ENCODE measurements at regions of chr10 and their contacts with region 1.

Region 1: GRCh38 chr10:110210674-110211464 is 3.5 kb downstream of the MXI1 start:
- DNase-seq: peak; percentile 87 to 93 (median 88)
- H3K4me3 ChIP-seq: peak overlapping the region; percentile 42 to 78
- H3K4me3 Mint-ChIP-seq: peak overlapping the region; percentile 91 to 99 (median 94)
- H3K27ac ChIP-seq: peak overlapping the region; percentile 92
- H3K27ac Mint-ChIP-seq: peak overlapping the region; percentile 94 to 99 (median 97)
- H3K4me1 ChIP-seq: peaks cover 59% of the 10 kb centered on the region
- H3K4me1 Mint-ChIP-seq: peaks cover 43 to 86% (median 52%) of the 10 kb centered on the region in 4 donors
- H3K27me3 ChIP-seq: no peaks in the 10 kb centered on the region
- H3K27me3 Mint-ChIP-seq: no peaks in the 10 kb centered on the region

Region 2: GRCh38 chr10:109487691-109488090 is 723.2 kb before region 1 on chr10:
- CTCF ChIA-PET with region 1: no interaction called
- POLR2A ChIA-PET with region 1: no interaction called
- intact Hi-C with region 1: no loop called
- DNase-seq: no peak
- H3K4me3 ChIP-seq: no peak overlapping the region
- H3K4me3 Mint-ChIP-seq: no peak overlapping the region
- H3K27ac ChIP-seq: no peak overlapping the region
- H3K27ac Mint-ChIP-seq: no peak overlapping the region
- H3K4me1 ChIP-seq: no peaks in the 10 kb centered on the region
- H3K4me1 Mint-ChIP-seq: no peaks in the 10 kb centered on the region
- H3K27me3 ChIP-seq: no peaks in the 10 kb centered on the region
- H3K27me3 Mint-ChIP-seq: no peaks in the 10 kb centered on the region

Region 3: GRCh38 chr10:110158051-110159005 is 52.5 kb before region 1 on chr10:
- CTCF ChIA-PET with region 1: interaction called, 10 read pairs
- POLR2A ChIA-PET with region 1: interaction called, 75 read pairs
- intact Hi-C with region 1: loop called (anchors 5 kb)
- DNase-seq: no peak
- H3K4me3 ChIP-seq: no peak overlapping the region
- H3K4me3 Mint-ChIP-seq: peak overlapping the region in 1 of 8 donors; percentile 28
- H3K27ac ChIP-seq: no peak overlapping the region
- H3K27ac Mint-ChIP-seq: peak overlapping the region in 1 of 7 donors; percentile 21
- H3K4me1 ChIP-seq: peaks cover 22% of the 10 kb centered on the region
- H3K4me1 Mint-ChIP-seq: peaks cover 11 to 40% (median 20%) of the 10 kb centered on the region in 4 donors
- H3K27me3 ChIP-seq: peaks cover 16% of the 10 kb centered on the region
- H3K27me3 Mint-ChIP-seq: peaks cover 39 to 63% of the 10 kb centered on the region in 2 donors

Region 4: GRCh38 chr10:110225756-110226542 is 15.1 kb after region 1 on chr10:
- CTCF ChIA-PET with region 1: interaction called, 203 read pairs
- POLR2A ChIA-PET with region 1: interaction called, 464 read pairs
- intact Hi-C with region 1: loop called (anchors 1 kb)
- DNase-seq: peak; percentile 88 to 90 (median 89)
- H3K4me3 ChIP-seq: peak overlapping the region; percentile 39 to 82
- H3K4me3 Mint-ChIP-seq: peak overlapping the region; percentile 92 to 96 (median 94)
- H3K27ac ChIP-seq: peak overlapping the region; percentile 67
- H3K27ac Mint-ChIP-seq: peak overlapping the region; percentile 91 to 96 (median 96)
- H3K4me1 ChIP-seq: peaks cover 29% of the 10 kb centered on the region
- H3K4me1 Mint-ChIP-seq: peaks cover 27 to 62% (median 42%) of the 10 kb centered on the region in 4 donors
- H3K27me3 ChIP-seq: no peaks in the 10 kb centered on the region
- H3K27me3 Mint-ChIP-seq: no peaks in the 10 kb centered on the region

Region 5: GRCh38 chr10:110273474-110273873 is 62.6 kb after region 1 on chr10:
- CTCF ChIA-PET with region 1: interaction called, 56 read pairs
- POLR2A ChIA-PET with region 1: interaction called, 46 read pairs
- intact Hi-C with region 1: no loop called
- DNase-seq: peak; percentile 20 to 74 (median 36)
- H3K4me3 ChIP-seq: no peak overlapping the region
- H3K4me3 Mint-ChIP-seq: peak overlapping the region in 5 of 8 donors; percentile 6 to 87 (median 66)
- H3K27ac ChIP-seq: no peak overlapping the region
- H3K27ac Mint-ChIP-seq: peak overlapping the region in 6 of 7 donors; percentile 33 to 96 (median 89)
- H3K4me1 ChIP-seq: peaks cover 47% of the 10 kb centered on the region
- H3K4me1 Mint-ChIP-seq: peaks cover 32 to 74% (median 61%) of the 10 kb centered on the region in 4 donors
- H3K27me3 ChIP-seq: no peaks in the 10 kb centered on the region
- H3K27me3 Mint-ChIP-seq: no peaks in the 10 kb centered on the region

Region 6: DNA sequence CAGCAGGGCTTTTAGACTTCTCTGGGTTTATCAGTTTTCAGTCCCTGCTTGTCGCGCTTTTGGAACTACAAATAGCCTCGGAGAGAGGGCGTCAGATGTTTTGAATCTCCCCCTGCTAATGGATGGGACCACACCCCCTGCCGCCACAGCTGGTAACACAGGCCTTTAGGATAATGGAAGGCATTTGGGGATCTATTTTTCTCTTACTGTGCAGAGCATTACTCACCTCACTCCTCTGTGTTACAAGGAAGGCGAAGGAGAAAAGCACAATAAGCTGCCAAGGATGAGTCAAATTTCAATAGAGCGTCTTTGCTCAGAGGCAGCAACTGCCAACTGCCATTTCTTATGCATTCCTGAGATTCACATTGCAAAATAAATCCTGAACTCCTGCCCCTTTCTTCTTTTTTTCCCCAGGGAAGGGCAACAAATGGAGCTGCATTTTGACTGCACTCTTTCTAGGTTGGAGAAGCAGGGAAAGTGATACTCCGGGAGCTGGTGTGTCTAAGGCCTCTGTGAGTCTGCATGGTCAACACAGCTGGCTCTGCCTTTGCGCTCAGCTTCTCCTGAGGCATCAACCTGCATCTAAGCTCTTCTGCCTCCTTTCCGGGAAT is 125.3 kb after region 1 on chr10:
- CTCF ChIA-PET with region 1: no interaction called
- POLR2A ChIA-PET with region 1: no interaction called
- intact Hi-C with region 1: no loop called
- DNase-seq: no peak
- H3K4me3 ChIP-seq: no peak overlapping the region
- H3K4me3 Mint-ChIP-seq: no peak overlapping the region
- H3K27ac ChIP-seq: no peak overlapping the region
- H3K27ac Mint-ChIP-seq: peak overlapping the region in 1 of 7 donors; percentile 29
- H3K4me1 ChIP-seq: peaks cover 15% of the 10 kb centered on the region
- H3K4me1 Mint-ChIP-seq: peaks cover 7 to 13% (median 10%) of the 10 kb centered on the region in 4 donors
- H3K27me3 ChIP-seq: no peaks in the 10 kb centered on the region
- H3K27me3 Mint-ChIP-seq: peaks cover 0 to 4% of the 10 kb centered on the region in 2 donors

Region 7: DNA sequence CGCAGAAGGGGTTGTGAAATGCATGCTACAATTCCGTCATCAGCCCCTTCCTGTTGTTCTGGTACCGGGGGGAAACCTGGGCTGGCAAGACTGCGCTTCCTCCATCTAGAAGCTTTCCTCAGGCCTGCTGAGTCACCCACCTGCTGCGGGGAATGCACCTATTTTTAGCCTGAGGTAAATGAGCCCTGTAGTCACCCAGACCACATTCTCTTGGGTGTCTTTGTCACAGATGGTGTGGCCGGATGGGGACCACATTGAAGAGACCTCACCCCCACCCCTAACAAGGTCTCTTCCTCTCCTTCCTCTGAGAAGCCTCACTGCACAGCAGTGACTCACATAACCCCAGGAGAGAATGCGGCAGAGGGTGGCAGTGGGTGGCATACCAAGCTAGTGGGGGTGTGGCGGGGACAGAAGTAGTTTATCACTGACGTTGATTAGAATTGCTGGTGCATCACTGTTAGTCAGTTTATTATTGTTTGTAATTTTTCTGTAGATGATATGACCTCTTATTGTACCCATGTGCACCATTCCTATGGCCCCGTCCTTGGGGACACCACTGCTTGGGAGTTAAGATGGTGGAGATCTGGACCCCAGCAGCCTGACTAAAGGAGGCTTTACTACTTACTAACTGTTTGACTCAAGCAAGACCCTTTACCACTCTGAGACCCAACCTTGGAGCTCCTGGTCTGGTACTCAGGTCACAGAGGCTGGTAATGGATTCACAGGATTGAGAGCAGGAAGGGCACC is 203.9 kb after region 1 on chr10:
- CTCF ChIA-PET with region 1: no interaction called
- POLR2A ChIA-PET with region 1: interaction called, 5 read pairs
- intact Hi-C with region 1: loop called (anchors 5 kb)
- DNase-seq: peak; percentile 88 to 99 (median 94)
- H3K4me3 ChIP-seq: peak overlapping the region in 1 of 2 donors; percentile 5
- H3K4me3 Mint-ChIP-seq: peak overlapping the region; percentile 22 to 71 (median 62)
- H3K27ac ChIP-seq: peak overlapping the region; percentile 62
- H3K27ac Mint-ChIP-seq: peak overlapping the region; percentile 89 to 98 (median 93)
- H3K4me1 ChIP-seq: peaks cover 43% of the 10 kb centered on the region
- H3K4me1 Mint-ChIP-seq: peaks cover 25 to 60% (median 33%) of the 10 kb centered on the region in 4 donors
- H3K27me3 ChIP-seq: no peaks in the 10 kb centered on the region
- H3K27me3 Mint-ChIP-seq: no peaks in the 10 kb centered on the region

Region 8: GRCh38 chr10:110918643-110919363 is 707.9 kb after region 1 on chr10 and contains the start of gene BBIP1:
- CTCF ChIA-PET with region 1: no interaction called
- POLR2A ChIA-PET with region 1: interaction called, 11 read pairs
- intact Hi-C with region 1: loop called (anchors 5 kb)
- DNase-seq: peak in 1 of 5 donors; percentile 96
- H3K4me3 ChIP-seq: peak within 1 kb of the TSS; percentile 85 to 99
- H3K4me3 Mint-ChIP-seq: peak within 1 kb of the TSS; percentile 92 to 99 (median 98)
- H3K27ac ChIP-seq: peak within 1 kb of the TSS; percentile 99
- H3K27ac Mint-ChIP-seq: peak within 1 kb of the TSS; percentile 98 to 100 (median 100)
- H3K4me1 ChIP-seq: peaks cover 43% of the 10 kb centered on the region
- H3K4me1 Mint-ChIP-seq: peaks cover 27 to 64% (median 35%) of the 10 kb centered on the region in 4 donors
- H3K27me3 ChIP-seq: no peaks in the 10 kb centered on the region
- H3K27me3 Mint-ChIP-seq: no peaks in the 10 kb centered on the region
- total RNA-seq, gene BBIP1: 42.9 to 46.8 TPM

Measured in CD4-positive, alpha-beta memory T cell (primary cell).